CD4-positive, alpha-beta T cell (primary cell): ENCODE measurements at regions of chrX and their contacts with region 1.

Region 1: GRCh38 chrX:129905787-129906580 is at the start of gene UTP14A:
- DNase-seq: peak; percentile 61 to 94 (median 76)
- ATAC-seq: peak; percentile 91
- H3K4me3 ChIP-seq: peak within 1 kb of the TSS; percentile 74
- H3K4me3 Mint-ChIP-seq: peak within 1 kb of the TSS; percentile 94
- H3K27ac ChIP-seq: peak within 1 kb of the TSS; percentile 37 to 41
- H3K27ac Mint-ChIP-seq: peak within 1 kb of the TSS; percentile 84
- H3K4me1 ChIP-seq: peaks cover 10% of the 10 kb centered on the region
- H3K4me1 Mint-ChIP-seq: peaks cover 7% of the 10 kb centered on the region
- H3K27me3 ChIP-seq: no peaks in the 10 kb centered on the region
- H3K27me3 Mint-ChIP-seq: no peaks in the 10 kb centered on the region
- CTCF ChIP-seq: no peak
- total RNA-seq, gene UTP14A: 8.8 to 9.8 TPM

Region 2: DNA sequence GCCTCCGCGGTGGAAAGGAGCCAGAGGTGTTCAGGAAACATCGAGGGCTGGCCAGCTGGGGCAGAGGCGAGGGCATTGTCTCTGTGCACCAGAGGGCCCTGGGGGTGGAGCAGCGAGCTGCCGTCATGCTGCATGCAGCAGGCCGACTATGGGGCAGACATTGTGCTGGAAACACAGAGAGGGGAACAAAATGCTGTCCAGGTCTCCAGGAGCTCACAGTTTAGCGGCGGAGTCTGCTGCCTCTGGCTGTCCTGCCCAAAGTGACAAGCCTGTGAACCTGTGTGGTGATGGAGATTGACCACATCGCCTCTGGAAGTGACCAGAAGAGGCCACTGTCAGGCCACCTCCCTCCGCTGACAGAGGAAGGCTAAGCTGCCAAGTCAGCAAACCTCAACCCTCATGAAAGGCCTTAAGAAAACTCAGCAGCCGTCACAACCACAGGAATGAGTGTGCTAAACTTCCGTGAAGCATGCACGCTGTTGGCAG is 146.4 kb before region 1 on chrX:
- CTCF ChIA-PET with region 1: no interaction called
- POLR2A ChIA-PET with region 1: no interaction called
- intact Hi-C with region 1: no loop called
- DNase-seq: peak in 12 of 14 experiments; percentile 28 to 85 (median 46)
- ATAC-seq: peak; percentile 81
- H3K4me3 ChIP-seq: peak overlapping the region; percentile 5
- H3K4me3 Mint-ChIP-seq: peak overlapping the region; percentile 72
- H3K27ac ChIP-seq: peak overlapping the region; percentile 35 to 40
- H3K27ac Mint-ChIP-seq: peak overlapping the region; percentile 85
- H3K4me1 ChIP-seq: peaks cover 82% of the 10 kb centered on the region
- H3K4me1 Mint-ChIP-seq: peaks cover 73% of the 10 kb centered on the region
- H3K27me3 ChIP-seq: no peaks in the 10 kb centered on the region
- H3K27me3 Mint-ChIP-seq: no peaks in the 10 kb centered on the region
- CTCF ChIP-seq: no peak

Region 3: DNA sequence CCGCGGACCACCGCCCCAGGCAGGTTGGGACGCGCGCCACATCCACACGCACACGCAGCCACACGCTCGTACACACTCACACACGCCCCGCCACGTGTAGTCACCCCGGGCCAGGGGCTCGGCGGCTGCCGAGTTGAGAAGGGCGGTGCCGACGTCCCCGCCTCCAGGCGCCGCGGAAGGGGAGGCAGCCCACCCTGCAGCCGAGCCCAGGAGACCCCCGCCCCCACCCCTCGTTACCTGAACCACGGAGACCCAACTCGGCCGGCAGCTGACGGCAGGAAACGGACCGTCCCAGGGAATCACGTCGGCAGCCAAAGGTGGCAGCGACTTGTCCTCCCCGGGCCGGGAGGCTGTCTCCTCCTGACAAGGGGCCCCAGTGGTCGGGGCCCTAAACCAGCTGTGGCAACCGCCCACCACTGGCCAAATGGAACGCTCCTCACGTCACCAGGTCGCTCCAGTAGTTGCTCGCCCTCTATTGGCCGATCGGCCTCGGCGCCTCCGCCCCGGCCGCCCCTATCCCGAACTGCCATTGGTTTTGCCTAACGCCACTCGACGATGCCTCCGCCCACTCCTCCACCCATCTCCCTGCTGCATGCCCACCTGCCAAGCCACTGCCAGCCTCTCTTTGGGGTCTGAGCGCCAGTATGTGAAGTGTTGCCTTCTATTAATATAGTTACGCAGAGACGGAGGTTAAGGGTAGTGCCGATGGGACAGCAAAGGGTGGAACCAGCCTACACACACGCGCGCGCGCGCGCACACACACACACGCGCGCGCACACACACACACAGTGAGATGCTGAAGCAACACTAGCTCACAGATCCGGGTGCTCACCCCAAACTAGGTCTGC is 62.3 kb before region 1 on chrX and contains the start of gene ZDHHC9:
- CTCF ChIA-PET with region 1: no interaction called
- POLR2A ChIA-PET with region 1: interaction called, 3 read pairs
- intact Hi-C with region 1: loop called in 1 of 2 experiments (anchors 5 kb)
- DNase-seq: peak; percentile 69 to 91 (median 79)
- ATAC-seq: peak; percentile 94
- H3K4me3 ChIP-seq: peak within 1 kb of the TSS; percentile 72
- H3K4me3 Mint-ChIP-seq: peak within 1 kb of the TSS; percentile 94
- H3K27ac ChIP-seq: no peak within 1 kb of the TSS
- H3K27ac Mint-ChIP-seq: peak within 1 kb of the TSS; percentile 87
- H3K4me1 ChIP-seq: peaks cover 13% of the 10 kb centered on the region
- H3K4me1 Mint-ChIP-seq: peaks cover 34% of the 10 kb centered on the region
- H3K27me3 ChIP-seq: no peaks in the 10 kb centered on the region
- H3K27me3 Mint-ChIP-seq: no peaks in the 10 kb centered on the region
- CTCF ChIP-seq: no peak
- total RNA-seq, gene ZDHHC9: 3.0 to 4.1 TPM